ENCODE measurements at regions of chrX and their contacts with region 1.

Region 1: GRCh38 chrX:37745354-37745753 is 34.5 kb upstream of the CYBB start:
- DNase-seq: peak; percentile 92
- H3K4me3 Mint-ChIP-seq: peak overlapping the region; percentile 3
- H3K27ac Mint-ChIP-seq: peak overlapping the region; percentile 85
- H3K4me1 Mint-ChIP-seq: peaks cover 18% of the 10 kb centered on the region
- H3K27me3 Mint-ChIP-seq: peaks cover 20% of the 10 kb centered on the region

Region 2: GRCh38 chrX:37776283-37776986 is 31.1 kb after region 1 on chrX:
- intact Hi-C with region 1: loop called (anchors 1 kb)
- DNase-seq: peak; percentile 63
- H3K4me3 Mint-ChIP-seq: peak overlapping the region; percentile 19
- H3K27ac Mint-ChIP-seq: peak overlapping the region; percentile 34
- H3K4me1 Mint-ChIP-seq: peaks cover 18% of the 10 kb centered on the region
- H3K27me3 Mint-ChIP-seq: no peaks in the 10 kb centered on the region

Region 3: GRCh38 chrX:37825209-37825842 is 80.0 kb after region 1 on chrX:
- intact Hi-C with region 1: loop called (anchors 1 kb)
- DNase-seq: peak; percentile 84
- H3K4me3 Mint-ChIP-seq: no peak overlapping the region
- H3K27ac Mint-ChIP-seq: no peak overlapping the region
- H3K4me1 Mint-ChIP-seq: peaks cover 15% of the 10 kb centered on the region
- H3K27me3 Mint-ChIP-seq: no peaks in the 10 kb centered on the region

Region 4: DNA sequence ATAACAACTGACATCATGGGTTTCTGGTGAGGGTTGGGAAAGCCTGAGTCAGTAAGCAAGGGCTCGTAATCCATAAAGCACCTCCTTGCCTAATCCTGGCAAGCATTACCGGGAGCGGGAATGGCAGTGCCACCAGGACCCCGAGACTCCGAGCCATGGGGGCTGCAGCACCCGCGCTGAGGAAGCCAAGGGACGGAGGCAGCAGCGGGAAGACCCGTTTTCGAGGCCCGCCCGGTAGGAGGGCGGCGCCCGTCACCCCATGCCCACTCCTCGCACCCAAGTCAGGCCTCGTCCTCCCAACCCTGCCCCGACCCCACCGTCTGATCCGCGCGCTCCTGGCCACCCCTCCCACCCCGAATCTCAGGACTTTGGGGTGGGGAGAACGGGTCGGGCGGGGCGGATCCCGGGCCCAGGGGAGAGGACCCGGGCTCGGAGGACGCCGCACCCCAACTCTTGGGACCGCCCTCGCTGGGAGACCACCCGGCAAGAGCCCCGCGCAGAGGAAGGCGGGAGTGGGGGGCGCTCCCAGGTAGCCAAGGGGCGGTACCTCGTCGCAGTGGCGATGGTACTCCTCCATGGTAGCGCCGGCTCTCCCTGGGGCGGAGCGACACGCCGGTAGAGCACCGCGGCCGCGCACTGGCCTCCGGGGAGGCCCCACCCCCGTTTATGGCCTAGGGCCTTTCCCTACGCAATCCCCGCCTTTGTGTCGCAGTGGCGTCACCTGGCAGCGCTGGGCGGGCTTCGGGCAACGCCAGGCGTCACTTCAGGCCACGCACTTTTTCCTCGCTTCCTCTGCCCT is 101.8 kb after region 1 on chrX and contains the start of gene DYNLT3:
- intact Hi-C with region 1: loop called (anchors 1 kb)
- DNase-seq: peak; percentile 93
- H3K4me3 Mint-ChIP-seq: peak within 1 kb of the TSS; percentile 79
- H3K27ac Mint-ChIP-seq: peak within 1 kb of the TSS; percentile 90
- H3K4me1 Mint-ChIP-seq: peaks cover 13% of the 10 kb centered on the region
- H3K27me3 Mint-ChIP-seq: no peaks in the 10 kb centered on the region
- total RNA-seq, gene DYNLT3: 13.3 and 14.5 TPM in 2 replicates

Measured in activated CD4-positive, alpha-beta T cell treated with anti-CD3 and anti-CD28 coated beads, Interleukin-2, amount 10 ng/mL, durations not matched to agents 24 days and 14 days (primary cell).